Activated B cell treated with CpG ODN at 0.5 μM for 24 hours (primary cell): ENCODE measurements at regions of chr4 and their contacts with region 1.

Region 1: DNA sequence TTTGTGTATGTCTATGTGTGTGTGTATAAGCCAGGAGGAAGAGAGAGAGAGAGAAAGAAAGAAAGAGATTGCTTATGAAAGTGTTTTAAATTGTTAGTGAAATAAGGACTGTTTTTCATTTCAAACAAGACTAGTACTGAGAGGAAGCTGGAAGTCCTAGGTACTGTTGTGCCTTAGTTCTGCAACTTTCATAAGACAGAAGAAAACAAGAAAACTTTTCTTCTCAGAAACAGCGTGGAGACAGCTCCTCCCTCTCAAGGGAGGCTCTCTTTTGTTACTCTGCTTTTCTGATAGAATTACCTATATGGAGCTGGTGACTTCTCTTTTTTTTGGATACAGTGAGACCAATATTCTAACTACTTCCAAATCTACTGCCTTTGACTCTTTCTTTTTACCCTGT is 62.5 kb downstream of the BANK1 start:
- DNase-seq: no peak
- ATAC-seq: peak; percentile 25
- H3K4me3 Mint-ChIP-seq: peak overlapping the region; percentile 69
- H3K27ac Mint-ChIP-seq: peak overlapping the region; percentile 94
- H3K4me1 Mint-ChIP-seq: peaks cover 91% of the 10 kb centered on the region
- H3K27me3 Mint-ChIP-seq: no peaks in the 10 kb centered on the region
- CTCF ChIP-seq: no peak

Region 2: GRCh38 chr4:101695176-101695575 is 157.9 kb before region 1 on chr4:
- CTCF ChIA-PET with region 1: no interaction called
- POLR2A ChIA-PET with region 1: no interaction called
- intact Hi-C with region 1: loop called (anchors 5 kb)
- DNase-seq: no peak
- ATAC-seq: no peak
- H3K4me3 Mint-ChIP-seq: no peak overlapping the region
- H3K27ac Mint-ChIP-seq: peak overlapping the region; percentile 51
- H3K4me1 Mint-ChIP-seq: peaks cover 82% of the 10 kb centered on the region
- H3K27me3 Mint-ChIP-seq: no peaks in the 10 kb centered on the region
- CTCF ChIP-seq: no peak

Region 3: GRCh38 chr4:101806914-101807313 is 46.1 kb before region 1 on chr4:
- CTCF ChIA-PET with region 1: interaction called, 3 read pairs
- POLR2A ChIA-PET with region 1: interaction called, 12 read pairs
- intact Hi-C with region 1: loop called (anchors 1 kb)
- DNase-seq: no peak
- ATAC-seq: peak; percentile 87
- H3K4me3 Mint-ChIP-seq: peak overlapping the region; percentile 73
- H3K27ac Mint-ChIP-seq: peak overlapping the region; percentile 95
- H3K4me1 Mint-ChIP-seq: peaks cover 83% of the 10 kb centered on the region
- H3K27me3 Mint-ChIP-seq: no peaks in the 10 kb centered on the region
- CTCF ChIP-seq: no peak

Region 4: DNA sequence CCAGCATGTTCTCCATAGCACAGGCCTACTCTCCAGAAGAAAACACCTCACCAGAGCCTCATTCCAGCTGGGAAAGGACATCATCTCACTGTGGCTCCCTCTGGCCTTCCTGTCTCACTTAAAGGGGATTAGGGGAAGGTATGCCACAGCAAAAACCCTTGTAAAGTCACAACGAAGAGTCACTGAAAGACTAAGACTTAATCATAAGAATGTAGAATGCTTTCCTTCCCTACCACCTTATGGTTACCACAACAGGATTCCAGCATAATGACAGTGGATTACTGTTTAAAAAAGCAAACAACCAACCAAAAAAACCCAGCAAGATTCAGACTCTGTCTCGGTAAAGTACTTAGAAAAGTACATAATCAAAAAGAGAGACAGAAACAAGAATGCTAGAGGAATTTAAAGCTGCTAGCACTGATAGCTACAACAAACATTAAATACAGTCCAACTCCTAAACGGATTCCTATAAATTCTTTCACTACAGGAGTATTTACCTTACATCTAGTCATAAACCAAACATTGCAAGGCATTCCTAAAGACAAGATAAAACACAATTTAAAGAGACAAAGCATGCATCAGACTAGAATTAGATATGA is 12.6 kb after region 1 on chr4:
- CTCF ChIA-PET with region 1: no interaction called
- POLR2A ChIA-PET with region 1: interaction called, 5 read pairs
- intact Hi-C with region 1: loop called (anchors 1 kb)
- DNase-seq: no peak
- ATAC-seq: no peak
- H3K4me3 Mint-ChIP-seq: no peak overlapping the region
- H3K27ac Mint-ChIP-seq: peak overlapping the region; percentile 66
- H3K4me1 Mint-ChIP-seq: peaks cover 68% of the 10 kb centered on the region
- H3K27me3 Mint-ChIP-seq: no peaks in the 10 kb centered on the region
- CTCF ChIP-seq: no peak